Activated naive CD4-positive, alpha-beta T cell treated with anti-CD3 and anti-CD28 coated beads for 36 hours (primary cell): ENCODE measurements at regions of chr2 and their contacts with region 1.

Region 1: GRCh38 chr2:210195101-210195852 is 24.1 kb upstream of the KANSL1L start:
- DNase-seq: no peak
- H3K4me3 Mint-ChIP-seq: no peak overlapping the region
- H3K27ac Mint-ChIP-seq: no peak overlapping the region
- H3K4me1 Mint-ChIP-seq: peaks cover 2% of the 10 kb centered on the region
- H3K27me3 Mint-ChIP-seq: no peaks in the 10 kb centered on the region

Region 2: GRCh38 chr2:208466151-208466919 is 1728.9 kb before region 1 on chr2:
- CTCF ChIA-PET with region 1: no interaction called
- intact Hi-C with region 1: loop called (anchors 5 kb)
- DNase-seq: peak; percentile 36
- H3K4me3 Mint-ChIP-seq: no peak overlapping the region
- H3K27ac Mint-ChIP-seq: no peak overlapping the region
- H3K4me1 Mint-ChIP-seq: no peaks in the 10 kb centered on the region
- H3K27me3 Mint-ChIP-seq: peaks cover 2% of the 10 kb centered on the region

Region 3: DNA sequence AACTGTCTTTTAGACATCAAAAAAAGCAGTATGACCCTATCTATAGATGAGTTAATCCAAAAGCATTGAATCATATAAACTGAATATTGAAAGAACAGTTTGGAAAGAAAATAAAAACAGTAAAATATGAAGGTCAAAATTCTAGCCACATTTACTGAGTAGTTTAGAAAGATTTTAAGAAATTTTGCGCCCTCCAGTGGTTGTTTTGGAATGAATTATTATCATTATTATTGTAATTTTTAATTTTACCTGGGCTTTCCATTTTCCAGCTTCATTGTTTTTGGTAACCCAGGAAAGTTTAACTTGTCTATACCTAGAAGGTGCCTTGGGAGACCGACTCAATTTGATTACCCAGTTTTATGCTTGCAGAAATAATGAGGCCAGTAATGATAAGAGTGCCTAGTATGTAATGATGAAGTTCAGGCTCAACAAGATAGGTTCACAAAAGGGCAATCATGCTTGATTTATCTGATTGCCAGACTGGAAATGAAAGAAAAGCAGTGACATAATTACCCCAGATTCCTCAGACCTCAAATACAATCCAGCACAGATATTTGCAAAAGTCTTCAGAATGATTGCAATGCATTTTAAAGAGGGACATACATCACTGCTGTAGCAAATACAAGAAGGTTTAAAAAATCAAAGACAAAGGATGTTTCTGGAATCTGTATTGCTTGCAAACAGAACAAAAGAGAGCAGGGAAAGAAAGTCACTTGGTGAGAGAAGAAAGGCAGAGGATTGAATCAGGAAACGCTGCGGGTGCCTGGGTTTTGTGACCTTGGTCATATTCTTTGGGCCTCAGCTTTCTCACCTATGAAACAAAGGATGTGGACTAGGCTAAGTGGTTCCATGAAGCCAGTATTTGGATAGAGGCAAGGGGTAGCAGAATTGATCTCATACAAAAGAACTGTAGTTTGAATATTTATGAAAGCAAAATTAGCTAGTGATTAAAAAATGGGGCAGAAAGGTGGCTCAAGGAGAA is 617.6 kb before region 1 on chr2:
- CTCF ChIA-PET with region 1: no interaction called
- intact Hi-C with region 1: loop called (anchors 5 kb)
- DNase-seq: no peak
- H3K4me3 Mint-ChIP-seq: no peak overlapping the region
- H3K27ac Mint-ChIP-seq: no peak overlapping the region
- H3K4me1 Mint-ChIP-seq: peaks cover 6% of the 10 kb centered on the region
- H3K27me3 Mint-ChIP-seq: peaks cover 3% of the 10 kb centered on the region

Region 4: DNA sequence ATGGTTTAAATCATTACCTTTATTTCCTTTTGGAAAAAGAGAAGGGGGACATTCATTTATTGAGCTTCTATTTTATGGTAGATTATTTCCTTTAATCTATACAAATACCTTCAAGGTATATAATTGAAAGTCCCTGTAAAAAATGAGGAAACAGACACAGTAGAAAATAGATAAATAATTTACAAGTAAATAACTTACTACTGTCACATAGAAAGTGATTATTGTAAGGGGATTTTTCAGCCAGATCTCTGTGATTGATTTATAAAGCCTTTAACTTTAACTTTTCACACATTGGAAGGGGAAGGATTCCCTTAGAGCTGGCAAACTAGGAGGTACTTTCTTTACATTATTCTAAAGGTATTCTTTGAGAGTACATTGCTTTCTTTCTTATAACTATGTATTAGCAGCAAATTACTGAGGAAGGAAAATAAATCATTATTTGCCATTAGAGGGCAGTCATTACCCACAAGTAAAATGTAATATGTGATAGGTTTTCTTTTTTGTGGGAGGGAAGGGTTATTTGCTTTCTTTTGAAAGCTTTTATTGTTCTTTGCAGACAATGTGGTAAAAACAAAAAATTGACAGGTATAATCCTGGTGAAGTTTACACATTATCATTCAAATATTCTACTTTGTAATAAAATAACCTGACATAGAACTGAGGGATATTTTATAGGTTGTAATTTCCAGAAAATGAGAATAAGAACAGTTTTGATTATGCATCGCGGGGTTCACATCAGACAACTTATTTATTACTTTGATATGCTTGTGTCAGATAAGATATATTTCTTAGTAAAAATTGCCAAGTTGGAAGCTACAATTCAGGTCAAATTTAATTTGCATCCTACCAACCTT is 217.7 kb before region 1 on chr2:
- CTCF ChIA-PET with region 1: interaction called, 129 read pairs
- intact Hi-C with region 1: loop called (anchors 1 kb)
- DNase-seq: no peak
- H3K4me3 Mint-ChIP-seq: no peak overlapping the region
- H3K27ac Mint-ChIP-seq: no peak overlapping the region
- H3K4me1 Mint-ChIP-seq: no peaks in the 10 kb centered on the region
- H3K27me3 Mint-ChIP-seq: no peaks in the 10 kb centered on the region

Region 5: DNA sequence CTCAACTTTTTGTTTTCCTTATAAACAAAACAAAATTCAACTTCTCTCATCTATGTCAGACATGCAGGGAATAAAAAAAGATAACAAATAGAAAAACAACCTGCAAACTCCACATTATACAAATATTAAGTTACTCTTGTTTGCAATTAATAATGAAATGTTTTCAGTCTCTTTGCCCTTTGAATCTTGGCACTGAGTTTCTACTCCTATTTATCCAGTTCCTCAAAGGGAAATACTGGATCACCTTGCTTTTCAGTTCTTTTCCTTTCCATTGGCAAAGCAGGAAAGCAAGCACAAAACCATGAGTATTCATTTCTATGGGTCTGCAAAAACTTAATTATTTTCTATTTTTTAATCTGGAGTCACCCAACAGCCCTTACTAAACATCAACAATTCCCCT is 47.7 kb before region 1 on chr2:
- CTCF ChIA-PET with region 1: no interaction called
- intact Hi-C with region 1: loop called (anchors 1 kb)
- DNase-seq: no peak
- H3K4me3 Mint-ChIP-seq: no peak overlapping the region
- H3K27ac Mint-ChIP-seq: no peak overlapping the region
- H3K4me1 Mint-ChIP-seq: peaks cover 1% of the 10 kb centered on the region
- H3K27me3 Mint-ChIP-seq: no peaks in the 10 kb centered on the region